Activated T-helper 1 cell treated with anti-CD3 and anti-CD28 coated beads, Interleukin-12 subunit alpha, Interleukin-12 subunit beta, Interleukin-2, Interleukin-4 antibody, amounts not matched to agents 30 ng/mL and 10 ng/mL and 1 ng/mL, durations not matched to agents 14 hours and 24 hours and 36 hours (primary cell): ENCODE measurements at regions of chr19 and their contacts with region 1.

Region 1: DNA sequence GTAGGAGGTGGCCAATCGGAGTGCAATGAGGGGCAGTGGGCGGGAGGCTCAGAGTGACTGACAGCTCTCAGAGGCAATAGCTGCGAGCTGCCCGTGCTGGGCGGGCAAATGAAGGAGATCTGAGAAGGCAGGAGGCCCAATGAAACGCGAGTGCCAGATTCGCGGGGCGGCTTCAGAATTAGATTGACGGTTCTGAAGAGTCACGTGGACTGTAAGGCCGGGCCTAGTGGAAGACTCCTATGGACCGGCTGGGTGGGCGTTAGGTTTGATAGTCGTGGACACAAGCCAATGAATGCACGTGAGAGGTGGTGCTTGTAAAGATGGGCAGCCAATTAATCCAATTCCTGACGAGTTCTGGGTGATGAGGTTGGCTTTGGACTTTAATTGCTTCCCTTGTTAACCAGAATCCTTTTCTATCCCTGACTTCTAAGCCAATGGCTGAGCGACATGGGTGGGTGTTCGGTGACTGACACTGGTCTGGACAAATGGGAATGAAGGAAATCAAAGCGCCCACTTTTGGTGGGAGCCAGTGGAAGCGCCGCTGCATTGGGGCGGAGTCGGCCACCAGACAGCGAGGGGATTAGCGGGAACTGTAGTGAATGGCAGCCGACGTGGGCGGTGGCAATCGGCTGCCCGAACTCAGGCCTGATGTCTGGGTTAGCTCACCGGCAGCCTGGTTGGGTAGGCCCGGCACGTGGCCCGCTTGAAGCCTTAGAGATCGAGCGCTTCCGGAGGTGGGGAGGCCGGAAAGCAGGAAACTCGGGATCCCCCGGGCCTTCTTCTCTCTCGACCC is 524 bp upstream of the KHSRP start:
- DNase-seq: peak; percentile 99
- H3K4me3 Mint-ChIP-seq: peak overlapping the region; percentile 79
- H3K27ac Mint-ChIP-seq: peak overlapping the region; percentile 90
- H3K4me1 Mint-ChIP-seq: peaks cover 28% of the 10 kb centered on the region
- H3K27me3 Mint-ChIP-seq: no peaks in the 10 kb centered on the region

Region 2: DNA sequence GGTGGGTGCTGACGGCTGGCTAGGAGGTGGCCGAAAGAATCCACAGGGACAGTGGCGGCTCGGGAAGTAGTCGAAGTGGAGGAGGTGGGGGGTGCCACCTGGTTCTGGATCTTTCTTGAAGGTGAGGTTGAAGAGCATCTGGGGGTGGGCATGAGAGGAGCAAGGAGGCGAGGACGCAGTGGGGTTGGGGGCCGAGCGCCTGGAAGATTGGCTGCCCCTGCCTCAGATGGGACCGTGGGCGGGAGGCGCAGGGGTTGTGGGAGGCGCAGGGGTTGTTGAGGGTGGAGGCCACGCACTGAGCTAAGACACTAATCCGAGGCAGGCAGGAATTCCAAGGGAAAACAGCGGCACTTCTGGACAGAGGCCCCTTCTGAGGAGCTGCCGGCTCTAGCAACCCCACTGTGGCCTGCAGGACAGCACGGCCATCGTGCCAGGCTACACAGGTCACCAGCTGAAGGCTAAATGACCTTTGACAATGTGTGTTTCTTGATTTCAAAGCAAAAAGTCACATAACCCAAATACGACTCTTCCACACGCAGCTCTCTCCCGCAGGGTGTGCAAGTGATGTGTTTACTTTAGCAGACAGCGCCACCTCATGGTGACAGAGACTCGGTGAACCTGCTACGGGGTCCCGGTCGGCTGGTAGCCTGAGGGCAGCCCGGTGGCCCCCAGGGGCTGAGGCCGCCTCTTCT is 403.1 kb before region 1 on chr19:
- intact Hi-C with region 1: no loop called
- DNase-seq: peak; percentile 68
- H3K4me3 Mint-ChIP-seq: no peak overlapping the region
- H3K27ac Mint-ChIP-seq: no peak overlapping the region
- H3K4me1 Mint-ChIP-seq: no peaks in the 10 kb centered on the region
- H3K27me3 Mint-ChIP-seq: peaks cover 2% of the 10 kb centered on the region

Region 3: GRCh38 chr19:6199240-6199983 is 225.7 kb before region 1 on chr19:
- intact Hi-C with region 1: loop called (anchors 1 kb)
- DNase-seq: peak; percentile 99
- H3K4me3 Mint-ChIP-seq: peak overlapping the region; percentile 99
- H3K27ac Mint-ChIP-seq: peak overlapping the region; percentile 94
- H3K4me1 Mint-ChIP-seq: peaks cover 22% of the 10 kb centered on the region
- H3K27me3 Mint-ChIP-seq: peaks cover 2% of the 10 kb centered on the region

Region 4: GRCh38 chr19:6362027-6362350 is 63.1 kb before region 1 on chr19:
- intact Hi-C with region 1: loop called (anchors 1 kb)
- DNase-seq: no peak
- H3K4me3 Mint-ChIP-seq: peak overlapping the region; percentile 98
- H3K27ac Mint-ChIP-seq: peak overlapping the region; percentile 96
- H3K4me1 Mint-ChIP-seq: peaks cover 13% of the 10 kb centered on the region
- H3K27me3 Mint-ChIP-seq: no peaks in the 10 kb centered on the region

Region 5: DNA sequence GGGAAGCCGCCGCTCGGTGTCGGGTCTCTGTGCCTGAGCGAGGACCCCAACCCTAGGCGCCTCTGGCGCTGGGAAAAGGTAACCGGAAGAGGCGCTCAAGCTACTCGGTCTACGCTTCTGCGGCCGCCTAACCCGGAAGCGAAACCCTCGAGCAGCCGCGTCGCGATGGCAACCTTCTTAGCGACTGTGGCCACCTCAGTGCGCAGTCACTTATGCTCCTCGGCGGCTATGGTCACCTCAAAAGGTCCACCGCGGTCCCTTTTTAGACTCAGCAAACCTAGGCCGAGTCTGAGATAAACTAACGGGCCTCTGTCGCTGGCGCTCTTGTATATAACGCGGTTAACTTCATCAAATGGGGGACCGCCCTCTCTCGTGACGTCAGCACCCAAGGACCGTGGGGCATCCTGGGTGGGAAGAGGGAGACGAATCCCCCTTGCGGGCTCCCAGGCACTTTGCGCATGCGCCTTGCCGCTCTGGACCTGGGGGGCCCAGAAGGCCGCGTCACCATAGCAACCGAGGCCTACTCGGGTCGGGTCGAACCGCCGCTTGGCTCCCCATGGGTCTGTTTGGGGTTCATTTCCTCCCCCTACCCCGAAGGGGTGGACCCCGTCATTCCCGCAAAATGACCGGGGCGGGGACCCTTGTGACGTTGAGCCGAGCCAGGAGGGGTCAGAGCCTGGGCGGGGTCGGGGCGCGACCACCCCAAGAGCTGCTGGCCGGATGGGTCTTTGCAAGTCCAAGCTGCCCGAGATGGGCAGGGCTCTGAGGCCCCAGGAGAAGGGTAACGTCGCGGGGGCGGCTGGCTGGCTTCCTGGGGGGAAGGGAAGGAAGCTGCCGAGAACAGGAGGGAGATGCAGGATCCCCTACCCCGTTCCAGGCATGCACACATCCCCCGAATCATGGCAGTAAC is 31.8 kb before region 1 on chr19 and contains the start of gene GTF2F1:
- intact Hi-C with region 1: loop called (anchors 1 kb)
- DNase-seq: peak; percentile 87
- H3K4me3 Mint-ChIP-seq: peak within 1 kb of the TSS; percentile 98
- H3K27ac Mint-ChIP-seq: peak within 1 kb of the TSS; percentile 97
- H3K4me1 Mint-ChIP-seq: peaks cover 29% of the 10 kb centered on the region
- H3K27me3 Mint-ChIP-seq: no peaks in the 10 kb centered on the region
- total RNA-seq, gene GTF2F1: 62.9 and 65.5 TPM in 2 replicates

Region 6: DNA sequence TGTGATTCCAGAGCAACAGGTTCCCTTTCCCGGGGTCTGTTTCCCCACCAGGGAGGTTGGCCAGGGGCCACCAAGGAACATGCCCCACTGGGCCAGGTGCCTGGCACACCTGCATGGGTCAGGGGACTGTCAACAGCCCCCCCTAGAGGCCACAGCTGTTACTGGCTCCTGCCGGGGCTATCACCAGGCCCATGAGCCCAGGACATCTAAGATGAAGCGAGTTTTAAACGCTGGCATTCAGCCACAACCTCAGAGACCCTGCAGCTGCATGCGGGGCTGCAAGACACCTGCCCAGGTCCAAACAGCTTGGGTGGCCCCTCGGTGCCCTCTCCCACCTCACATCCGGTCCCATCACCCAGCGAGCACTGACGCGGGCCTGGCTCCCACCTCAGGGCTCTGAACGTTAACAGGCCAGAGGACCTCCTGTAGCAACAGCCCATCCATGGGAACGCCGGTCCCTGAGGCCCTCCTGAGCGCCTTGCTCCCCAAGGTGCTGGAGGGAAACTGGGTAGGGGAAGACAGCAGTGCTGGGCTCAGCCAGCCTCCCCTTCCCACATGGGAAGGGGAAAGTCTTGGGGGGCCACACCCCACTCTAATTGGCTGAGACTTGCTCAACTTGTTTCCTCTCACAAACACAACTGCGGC is 12.6 kb before region 1 on chr19:
- intact Hi-C with region 1: no loop called
- DNase-seq: no peak
- H3K4me3 Mint-ChIP-seq: no peak overlapping the region
- H3K27ac Mint-ChIP-seq: no peak overlapping the region
- H3K4me1 Mint-ChIP-seq: no peaks in the 10 kb centered on the region
- H3K27me3 Mint-ChIP-seq: peaks cover 2% of the 10 kb centered on the region

Region 7: GRCh38 chr19:6476155-6476895 is 51.2 kb after region 1 on chr19:
- intact Hi-C with region 1: loop called (anchors 1 kb)
- DNase-seq: peak; percentile 50
- H3K4me3 Mint-ChIP-seq: no peak overlapping the region
- H3K27ac Mint-ChIP-seq: no peak overlapping the region
- H3K4me1 Mint-ChIP-seq: peaks cover 14% of the 10 kb centered on the region
- H3K27me3 Mint-ChIP-seq: no peaks in the 10 kb centered on the region

Region 8: DNA sequence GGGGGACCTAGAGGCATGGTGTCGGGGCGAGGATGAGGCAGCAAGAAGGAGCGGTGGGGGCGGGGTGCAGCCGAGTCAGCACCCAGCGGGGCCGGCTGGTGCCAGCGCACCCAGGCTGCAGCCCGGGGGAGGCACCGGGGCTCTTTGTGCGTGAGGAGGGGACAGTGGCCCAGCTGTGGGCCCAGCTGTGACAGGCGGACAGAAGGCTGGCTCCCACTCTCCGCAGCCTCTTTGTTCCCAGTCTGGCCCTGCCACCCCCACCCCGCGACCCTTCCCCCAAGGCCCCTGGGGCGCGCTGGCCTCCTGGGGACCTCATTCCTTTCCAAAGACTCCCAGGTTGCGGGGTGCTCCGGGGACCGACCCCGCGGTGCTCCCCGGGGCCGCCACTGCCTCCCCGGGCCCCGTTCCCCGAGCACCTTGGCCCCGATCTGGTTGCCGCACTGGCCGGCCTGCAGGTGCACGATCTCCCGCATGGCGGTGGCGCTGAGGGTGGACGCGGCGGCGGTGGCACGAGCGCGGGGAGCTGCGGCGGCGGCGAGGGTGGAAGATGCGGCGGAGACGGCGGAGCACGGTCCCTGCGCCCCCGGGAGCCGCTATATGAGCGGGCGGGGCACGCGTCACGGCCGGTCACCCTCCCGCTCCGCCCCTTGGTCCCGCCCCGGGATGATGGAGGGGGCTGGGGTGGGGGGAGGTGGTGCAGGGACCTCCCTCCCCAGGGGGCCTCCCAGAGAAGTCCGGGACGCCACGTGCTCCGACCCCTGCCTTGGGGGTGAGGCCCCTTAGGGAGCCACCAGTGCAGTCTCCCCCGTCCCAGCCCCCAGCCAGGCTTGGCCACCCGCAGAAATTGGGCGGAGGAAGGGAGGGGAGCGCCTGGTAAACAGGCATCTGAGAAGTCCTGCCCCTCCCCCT is 76.9 kb after region 1 on chr19 and contains the start of gene TUBB4A:
- intact Hi-C with region 1: loop called (anchors 1 kb)
- DNase-seq: peak; percentile 31
- H3K4me3 Mint-ChIP-seq: peak within 1 kb of the TSS; percentile 82
- H3K27ac Mint-ChIP-seq: no peak within 1 kb of the TSS
- H3K4me1 Mint-ChIP-seq: peaks cover 21% of the 10 kb centered on the region
- H3K27me3 Mint-ChIP-seq: peaks cover 18% of the 10 kb centered on the region
- total RNA-seq, gene TUBB4A: 2.3 and 3.0 TPM in 2 replicates

Region 9: GRCh38 chr19:7506385-7507328 is 1081.5 kb after region 1 on chr19:
- intact Hi-C with region 1: no loop called
- DNase-seq: peak; percentile 33
- H3K4me3 Mint-ChIP-seq: peak overlapping the region; percentile 26
- H3K27ac Mint-ChIP-seq: no peak overlapping the region
- H3K4me1 Mint-ChIP-seq: no peaks in the 10 kb centered on the region
- H3K27me3 Mint-ChIP-seq: peaks cover 26% of the 10 kb centered on the region